Activated CD4-positive, alpha-beta T cell treated with anti-CD3 and anti-CD28 coated beads for 36 hours (primary cell): ENCODE measurements at regions of chr15 and their contacts with region 1.

Region 1: GRCh38 chr15:78540141-78540928 is at the start of gene PSMA4:
- DNase-seq: peak; percentile 96
- ATAC-seq: peak; percentile 86
- H3K4me3 Mint-ChIP-seq: peak within 1 kb of the TSS; percentile 91
- H3K27ac Mint-ChIP-seq: peak within 1 kb of the TSS; percentile 98
- H3K4me1 Mint-ChIP-seq: peaks cover 27% of the 10 kb centered on the region
- H3K27me3 Mint-ChIP-seq: no peaks in the 10 kb centered on the region
- total RNA-seq, gene PSMA4: 273 to 312 TPM

Region 2: DNA sequence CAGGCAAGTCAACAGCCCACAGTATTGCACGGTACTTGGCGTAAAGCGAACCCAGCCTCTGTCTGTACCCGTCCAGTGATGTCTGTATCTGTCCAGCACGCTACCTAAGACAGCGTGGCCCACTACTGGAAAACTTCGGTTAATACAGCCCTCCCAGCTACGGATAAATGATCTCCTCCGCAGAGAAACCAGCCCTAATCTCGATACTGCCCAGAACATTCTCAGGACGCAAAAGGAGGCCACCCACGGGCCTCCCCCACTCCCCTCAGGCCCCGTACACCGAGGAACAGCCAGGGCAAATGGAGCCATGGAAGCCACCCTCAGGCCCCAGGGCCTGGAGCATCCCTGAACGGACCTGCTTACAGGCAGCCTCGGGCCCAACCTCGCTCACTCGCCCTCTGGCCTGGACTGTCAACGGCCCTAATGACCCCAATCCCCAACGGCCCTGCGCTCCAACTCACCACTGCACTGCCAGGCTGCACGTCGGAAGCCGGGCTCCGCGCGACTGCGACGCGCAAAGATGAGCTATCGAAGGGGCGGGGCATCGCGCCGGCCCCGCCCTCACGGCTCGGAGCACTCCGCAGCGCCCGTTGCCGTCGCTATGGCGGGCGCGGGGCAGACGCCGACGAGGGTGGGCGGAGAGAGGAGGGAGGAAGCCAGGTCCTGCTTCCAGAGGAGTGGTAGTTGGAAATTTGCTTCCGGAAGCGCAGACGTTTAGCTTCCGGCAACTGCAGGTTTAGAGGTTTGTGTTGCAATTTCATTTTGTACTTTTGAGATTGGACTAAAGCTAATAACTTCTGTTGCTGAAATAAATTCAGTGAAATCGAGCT is 241.0 kb before region 1 on chr15 and contains the start of gene SKIC8:
- CTCF ChIA-PET with region 1: interaction called, 3 read pairs
- POLR2A ChIA-PET with region 1: no interaction called
- intact Hi-C with region 1: loop called in 1 of 2 experiments (anchors 1 kb)
- DNase-seq: peak; percentile 95
- ATAC-seq: peak; percentile 96
- H3K4me3 Mint-ChIP-seq: peak within 1 kb of the TSS; percentile 96
- H3K27ac Mint-ChIP-seq: peak within 1 kb of the TSS; percentile 91
- H3K4me1 Mint-ChIP-seq: peaks cover 29% of the 10 kb centered on the region
- H3K27me3 Mint-ChIP-seq: no peaks in the 10 kb centered on the region
- total RNA-seq, gene SKIC8: 39.2 to 52.6 TPM

Region 3: DNA sequence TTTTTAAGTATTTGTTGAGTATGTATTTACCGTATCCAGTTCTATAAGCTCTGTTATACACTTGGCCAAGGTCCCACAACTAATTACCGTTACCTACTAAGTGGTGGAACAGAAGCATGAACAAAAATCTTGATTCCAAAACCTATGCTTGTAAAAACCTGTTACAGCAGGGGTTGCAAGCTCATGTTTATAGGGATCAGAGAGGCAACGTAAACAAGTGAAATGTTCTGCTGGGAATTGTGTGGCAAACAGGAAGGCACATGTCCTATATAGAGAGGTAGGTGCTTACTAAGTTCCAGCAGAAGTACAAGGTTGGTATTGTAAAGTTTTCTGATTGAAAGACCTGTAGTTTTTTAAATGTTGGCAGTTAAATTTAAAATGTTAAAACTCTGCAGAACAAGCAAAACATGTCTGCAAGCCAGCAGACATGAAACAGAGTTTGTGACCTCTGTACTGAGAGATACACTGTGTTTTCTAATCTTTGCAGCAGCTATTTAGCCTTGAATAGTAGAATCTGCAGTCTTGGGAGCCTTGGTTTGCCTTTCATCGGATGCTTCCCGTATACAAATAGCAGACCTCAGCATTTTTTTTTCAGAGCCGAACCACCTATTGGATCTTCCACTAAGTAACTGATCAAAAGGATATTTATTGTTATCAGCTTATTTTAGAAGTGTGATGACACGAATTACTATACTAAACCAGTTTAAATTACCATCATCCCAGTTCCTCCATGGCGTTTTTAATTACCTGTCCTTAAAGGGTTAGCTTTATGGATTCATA is 90.9 kb before region 1 on chr15:
- CTCF ChIA-PET with region 1: no interaction called
- POLR2A ChIA-PET with region 1: no interaction called
- intact Hi-C with region 1: no loop called
- DNase-seq: no peak
- ATAC-seq: no peak
- H3K4me3 Mint-ChIP-seq: no peak overlapping the region
- H3K27ac Mint-ChIP-seq: no peak overlapping the region
- H3K4me1 Mint-ChIP-seq: peaks cover 61% of the 10 kb centered on the region
- H3K27me3 Mint-ChIP-seq: no peaks in the 10 kb centered on the region